Right ventricle myocardium superior (tissue), 1 donor: ENCODE measurements at regions of chr1 and their contacts with region 1.

Region 1: DNA sequence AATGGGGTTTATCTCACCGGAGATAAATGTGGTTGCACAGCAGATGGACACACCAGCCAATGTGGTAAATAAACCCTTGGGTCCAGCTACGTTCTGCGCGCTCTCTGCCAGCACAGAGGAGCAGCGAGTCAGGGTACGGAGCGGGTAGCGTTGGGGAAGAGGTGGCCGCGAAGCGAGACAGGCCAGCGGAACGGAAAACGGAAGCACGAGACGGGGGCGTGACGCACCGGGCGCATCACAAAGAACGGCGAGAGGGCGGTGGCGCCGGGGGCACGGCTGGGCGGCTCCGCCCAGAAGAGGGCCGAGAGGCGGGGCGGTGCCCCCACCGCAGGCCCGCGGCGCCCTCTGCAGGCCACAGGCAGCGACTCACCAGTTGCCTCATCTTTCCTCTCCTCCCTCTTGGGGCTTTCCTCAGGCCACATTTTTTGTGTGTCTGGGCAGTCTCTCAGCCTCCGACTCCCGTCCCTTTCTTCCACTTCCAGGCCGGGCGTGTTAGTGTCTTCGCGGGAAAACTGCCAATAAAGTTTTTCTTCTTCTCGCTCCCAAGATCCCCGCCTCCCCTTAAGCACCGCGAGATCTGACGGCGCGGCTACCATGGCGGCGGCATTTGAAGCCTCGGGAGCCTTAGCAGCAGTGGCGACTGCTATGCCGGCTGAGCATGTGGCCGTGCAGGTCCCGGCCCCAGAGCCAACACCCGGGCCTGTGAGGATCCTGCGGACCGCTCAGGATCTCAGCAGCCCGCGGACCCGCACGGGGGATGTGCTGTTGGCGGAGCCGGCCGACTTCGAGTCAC is at the start of gene DDX20:
- DNase-seq: peak; percentile 95
- ATAC-seq: peak; percentile 99
- total RNA-seq, gene DDX20: 5.8 TPM

Region 2: GRCh38 chr1:111481387-111482221 is 273.9 kb before region 1 on chr1:
- intact Hi-C with region 1: loop called (anchors 5 kb)
- DNase-seq: peak; percentile 89
- ATAC-seq: peak; percentile 96

Region 3: GRCh38 chr1:111648806-111649205 is 106.7 kb before region 1 on chr1:
- intact Hi-C with region 1: no loop called
- DNase-seq: no peak
- ATAC-seq: peak; percentile 18